ENCODE measurements at regions of chr3 and their contacts with region 1.

Region 1: DNA sequence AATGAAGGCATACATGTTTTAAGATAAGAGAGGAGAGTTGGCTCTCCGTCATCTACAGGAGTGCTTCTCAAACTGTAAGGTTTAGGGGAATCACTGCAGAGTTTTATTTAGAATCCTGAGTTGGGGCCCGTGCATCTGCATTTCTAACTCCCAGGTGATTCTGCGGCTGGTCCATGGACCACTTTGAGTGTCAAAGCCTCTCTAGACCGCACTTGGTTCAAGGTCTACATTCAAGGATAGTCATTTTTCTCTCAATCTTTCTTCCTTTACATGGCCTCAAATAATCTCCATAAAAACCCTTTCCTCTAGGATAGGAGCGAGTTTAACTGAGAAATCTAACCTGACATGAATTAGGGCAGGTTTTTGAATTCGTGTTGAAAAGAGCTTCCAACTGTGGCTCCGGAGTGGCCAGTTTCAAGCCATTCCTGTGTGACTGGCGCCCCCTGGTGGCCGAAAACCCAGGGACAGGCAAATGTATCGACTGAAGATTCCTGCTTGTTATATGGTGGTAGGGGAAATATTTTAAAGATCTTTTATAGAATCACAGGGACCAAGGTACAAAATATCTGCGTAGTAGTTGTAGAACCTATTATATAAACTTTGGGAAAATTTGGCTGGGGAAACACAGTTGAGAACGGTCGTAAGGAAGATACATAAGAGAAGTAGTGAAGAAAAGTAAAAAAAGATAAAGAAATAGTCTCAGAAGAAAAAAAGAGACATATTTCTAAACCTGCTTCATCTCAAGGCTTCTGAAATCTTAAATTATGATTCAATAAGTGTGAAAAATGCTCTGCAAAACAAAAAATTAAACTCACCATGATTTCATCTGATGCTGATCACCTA is 11.9 kb downstream of the GABRR3 start:
- DNase-seq: peak; percentile 96
- H3K4me3 Mint-ChIP-seq: no peak overlapping the region
- H3K27ac Mint-ChIP-seq: no peak overlapping the region
- H3K4me1 Mint-ChIP-seq: peaks cover 5% of the 10 kb centered on the region
- H3K27me3 Mint-ChIP-seq: no peaks in the 10 kb centered on the region

Region 2: GRCh38 chr3:96863129-96863740 is 1160.0 kb before region 1 on chr3:
- CTCF ChIA-PET with region 1: interaction called, 5 read pairs
- intact Hi-C with region 1: loop called (anchors 5 kb)
- DNase-seq: peak; percentile 36
- H3K4me3 Mint-ChIP-seq: no peak overlapping the region
- H3K27ac Mint-ChIP-seq: no peak overlapping the region
- H3K4me1 Mint-ChIP-seq: no peaks in the 10 kb centered on the region
- H3K27me3 Mint-ChIP-seq: no peaks in the 10 kb centered on the region

Region 3: GRCh38 chr3:97256060-97256459 is 767.1 kb before region 1 on chr3:
- CTCF ChIA-PET with region 1: no interaction called
- intact Hi-C with region 1: no loop called
- DNase-seq: no peak
- H3K4me3 Mint-ChIP-seq: no peak overlapping the region
- H3K27ac Mint-ChIP-seq: no peak overlapping the region
- H3K4me1 Mint-ChIP-seq: no peaks in the 10 kb centered on the region
- H3K27me3 Mint-ChIP-seq: no peaks in the 10 kb centered on the region

Region 4: DNA sequence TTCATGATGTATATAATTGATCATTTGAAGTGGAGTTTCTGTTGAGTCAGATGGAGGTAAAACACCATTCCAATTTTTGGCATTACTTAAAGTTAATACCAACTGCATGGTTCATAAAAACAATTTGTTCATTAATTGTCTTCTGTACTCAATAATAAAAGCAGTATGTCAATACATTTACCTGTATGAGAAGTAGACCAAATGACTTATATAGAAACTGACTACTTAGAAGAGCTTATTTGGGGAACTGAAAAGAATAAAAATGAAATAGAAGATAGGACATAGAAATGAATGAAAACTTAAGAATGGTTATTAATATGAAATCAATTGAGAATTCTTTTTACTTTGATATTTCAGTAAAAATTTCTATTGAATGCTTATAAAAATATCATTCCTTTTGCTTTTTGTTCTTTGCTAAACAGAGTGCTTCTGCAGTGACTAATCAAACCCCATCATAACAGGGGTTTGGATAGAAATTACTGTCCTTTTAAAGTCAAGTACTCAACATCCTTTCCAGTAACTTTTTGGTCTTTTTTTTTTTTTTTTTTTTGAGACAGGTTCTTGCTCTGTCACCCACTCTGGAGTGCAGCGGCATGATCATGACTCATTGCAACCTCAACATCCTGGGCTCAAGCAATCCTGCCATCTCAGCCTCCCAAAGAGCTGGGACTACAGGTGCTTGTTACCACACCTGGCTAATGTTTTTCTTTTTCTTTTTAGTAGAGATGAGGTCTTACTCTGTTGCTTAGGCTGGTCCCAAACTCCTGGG is 207.9 kb before region 1 on chr3:
- CTCF ChIA-PET with region 1: interaction called, 13 read pairs
- intact Hi-C with region 1: no loop called
- DNase-seq: peak; percentile 77
- H3K4me3 Mint-ChIP-seq: no peak overlapping the region
- H3K27ac Mint-ChIP-seq: peak overlapping the region; percentile 66
- H3K4me1 Mint-ChIP-seq: peaks cover 13% of the 10 kb centered on the region
- H3K27me3 Mint-ChIP-seq: peaks cover 1% of the 10 kb centered on the region